ENCODE measurements at regions of chr17 and their contacts with region 1.

Region 1: GRCh38 chr17:17752089-17752820 is 71.0 kb downstream of the RAI1 start:
- DNase-seq: peak; percentile 93 to 98 (median 97)
- ATAC-seq: peak; percentile 96
- H3K4me3 ChIP-seq: peak overlapping the region; percentile 62
- H3K4me3 Mint-ChIP-seq: peak overlapping the region; percentile 78 to 99 (median 92)
- H3K27ac ChIP-seq: peak overlapping the region; percentile 89
- H3K27ac Mint-ChIP-seq: peak overlapping the region; percentile 96 to 100 (median 98)
- H3K4me1 ChIP-seq: peaks cover 39 to 67% of the 10 kb centered on the region in 2 donors
- H3K4me1 Mint-ChIP-seq: peaks cover 50 to 93% (median 77%) of the 10 kb centered on the region in 7 donors
- H3K27me3 ChIP-seq: no peaks in the 10 kb centered on the region
- H3K27me3 Mint-ChIP-seq: no peaks in the 10 kb centered on the region

Region 2: DNA sequence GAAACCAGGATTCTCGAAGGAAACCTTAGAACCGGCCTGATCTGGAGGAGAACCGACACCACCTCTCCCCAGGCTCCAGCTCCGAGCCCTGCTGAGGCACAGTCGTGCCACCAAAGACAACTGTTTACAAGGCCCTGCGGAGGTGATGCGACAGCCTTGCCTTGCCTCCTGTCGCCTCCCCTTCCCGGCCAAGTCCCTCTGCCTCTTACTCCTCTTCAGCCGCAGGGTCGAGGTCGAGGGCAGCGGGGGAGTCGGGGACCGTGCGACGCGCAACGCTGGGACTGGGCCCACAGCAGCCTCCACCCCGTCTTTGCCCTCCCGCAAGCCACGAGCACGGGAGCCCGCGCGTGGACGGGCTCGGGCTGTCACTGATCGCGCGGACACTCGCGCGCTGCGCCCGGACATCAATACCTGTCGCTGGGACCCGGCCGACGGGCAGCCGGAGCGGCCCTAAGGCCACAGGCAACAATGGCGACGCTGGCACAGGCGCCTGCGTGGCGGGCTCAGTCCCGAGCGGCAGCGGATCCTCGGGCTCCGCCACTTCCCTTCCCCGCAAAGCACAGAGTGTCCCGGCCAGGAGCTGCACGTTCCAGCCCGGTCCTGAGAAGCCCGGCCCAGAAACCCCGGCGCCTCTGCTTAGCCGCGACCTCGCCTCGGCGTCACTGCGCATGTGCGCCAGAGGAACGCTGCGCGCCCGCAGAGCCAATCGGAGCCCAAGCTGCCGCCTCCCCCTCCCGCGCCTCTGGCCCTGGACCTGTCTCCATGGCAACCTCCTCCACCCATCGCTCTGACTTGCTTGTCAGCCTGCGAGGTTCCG is 1183.5 kb before region 1 on chr17 and contains the start of gene ZNF287:
- CTCF ChIA-PET with region 1: no interaction called
- POLR2A ChIA-PET with region 1: no interaction called
- intact Hi-C with region 1: no loop called
- DNase-seq: peak; percentile 81 to 96 (median 92)
- ATAC-seq: peak; percentile 98
- H3K4me3 ChIP-seq: peak within 1 kb of the TSS; percentile 73
- H3K4me3 Mint-ChIP-seq: peak within 1 kb of the TSS; percentile 81 to 87 (median 86)
- H3K27ac ChIP-seq: peak within 1 kb of the TSS; percentile 82
- H3K27ac Mint-ChIP-seq: peak within 1 kb of the TSS; percentile 59 to 97 (median 91)
- H3K4me1 ChIP-seq: peaks cover 6 to 14% of the 10 kb centered on the region in 2 donors
- H3K4me1 Mint-ChIP-seq: peaks cover 8 to 29% (median 19%) of the 10 kb centered on the region in 7 donors
- H3K27me3 ChIP-seq: no peaks in the 10 kb centered on the region
- H3K27me3 Mint-ChIP-seq: peaks cover 0 to 10% (median 0%) of the 10 kb centered on the region in 5 donors
- total RNA-seq, gene ZNF287: 9.6 to 18.1 (median 13.4) TPM

Region 3: GRCh38 chr17:17476865-17477467 is 275.3 kb before region 1 on chr17 and contains the start of gene MED9:
- CTCF ChIA-PET with region 1: no interaction called
- POLR2A ChIA-PET with region 1: no interaction called
- intact Hi-C with region 1: loop called in 1 of 2 experiments (anchors 2 kb)
- DNase-seq: peak; percentile 90 to 98 (median 94)
- ATAC-seq: peak; percentile 100
- H3K4me3 ChIP-seq: peak within 1 kb of the TSS; percentile 98
- H3K4me3 Mint-ChIP-seq: peak within 1 kb of the TSS; percentile 85 to 92 (median 92)
- H3K27ac ChIP-seq: peak within 1 kb of the TSS; percentile 87
- H3K27ac Mint-ChIP-seq: peak within 1 kb of the TSS; percentile 72 to 95 (median 92)
- H3K4me1 ChIP-seq: peaks cover 10 to 29% of the 10 kb centered on the region in 2 donors
- H3K4me1 Mint-ChIP-seq: peaks cover 20 to 58% (median 49%) of the 10 kb centered on the region in 7 donors
- H3K27me3 ChIP-seq: no peaks in the 10 kb centered on the region
- H3K27me3 Mint-ChIP-seq: peaks cover 0 to 11% (median 0%) of the 10 kb centered on the region in 5 donors
- total RNA-seq, gene MED9: 14.0 to 24.1 (median 17.2) TPM

Region 4: DNA sequence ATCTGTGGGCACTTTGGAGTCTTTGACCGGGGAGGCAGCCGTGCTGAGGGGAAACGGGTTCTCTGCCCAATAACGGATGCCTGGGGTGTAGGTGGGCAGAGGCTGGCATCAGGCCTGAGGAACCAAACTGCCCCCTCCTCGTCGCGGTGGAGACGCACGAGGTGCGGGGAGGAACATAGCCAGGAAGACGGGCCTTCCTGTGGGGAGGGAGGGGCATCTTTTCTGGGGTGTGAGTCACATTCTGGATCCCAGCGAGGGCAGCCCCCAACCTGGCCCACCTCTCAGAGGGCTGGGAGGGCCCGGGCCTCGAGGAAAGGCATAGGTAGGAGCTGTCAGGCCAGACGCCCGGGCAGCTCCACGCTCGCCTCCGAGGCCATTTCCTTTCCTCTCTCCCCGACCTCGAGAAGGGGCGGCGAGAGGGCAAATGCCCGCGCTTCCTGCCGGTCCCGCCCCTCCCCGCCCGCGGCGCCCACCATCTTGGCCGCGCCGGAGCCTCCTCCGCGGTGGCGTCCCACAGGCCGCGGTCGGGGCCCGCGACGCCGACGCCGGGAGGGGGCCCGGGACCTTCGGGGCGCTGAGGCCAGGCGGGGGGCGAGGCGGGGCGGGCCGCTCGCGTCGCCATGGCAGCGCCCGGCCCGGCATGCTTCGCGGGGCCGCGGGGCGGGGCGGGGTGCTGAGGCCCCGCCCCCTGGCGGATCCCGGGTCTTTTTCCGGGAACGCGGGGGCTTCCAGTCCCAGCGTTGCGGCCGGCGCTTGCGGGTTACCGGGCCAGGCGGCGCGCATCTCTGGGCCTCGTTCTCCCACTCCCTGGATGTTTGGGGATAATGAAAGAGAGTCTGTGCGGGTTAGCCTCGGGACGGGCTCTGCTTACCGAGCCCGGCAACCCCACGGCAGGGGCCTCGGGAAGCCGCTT is 57.8 kb before region 1 on chr17:
- CTCF ChIA-PET with region 1: interaction called, 4 read pairs
- POLR2A ChIA-PET with region 1: interaction called, 5 read pairs
- intact Hi-C with region 1: loop called (anchors 1 kb)
- DNase-seq: peak; percentile 65 to 83 (median 72)
- ATAC-seq: peak; percentile 87
- H3K4me3 ChIP-seq: peak overlapping the region; percentile 84
- H3K4me3 Mint-ChIP-seq: peak overlapping the region; percentile 88 to 96 (median 92)
- H3K27ac ChIP-seq: peak overlapping the region; percentile 93
- H3K27ac Mint-ChIP-seq: peak overlapping the region; percentile 95 to 99 (median 98)
- H3K4me1 ChIP-seq: peaks cover 15 to 51% of the 10 kb centered on the region in 2 donors
- H3K4me1 Mint-ChIP-seq: peaks cover 46 to 81% (median 72%) of the 10 kb centered on the region in 7 donors
- H3K27me3 ChIP-seq: no peaks in the 10 kb centered on the region
- H3K27me3 Mint-ChIP-seq: no peaks in the 10 kb centered on the region

Region 5: GRCh38 chr17:17706140-17707060 is 45.9 kb before region 1 on chr17:
- CTCF ChIA-PET with region 1: no interaction called
- POLR2A ChIA-PET with region 1: no interaction called
- intact Hi-C with region 1: no loop called
- DNase-seq: no peak
- ATAC-seq: no peak
- H3K4me3 ChIP-seq: no peak overlapping the region
- H3K4me3 Mint-ChIP-seq: no peak overlapping the region
- H3K27ac ChIP-seq: no peak overlapping the region
- H3K27ac Mint-ChIP-seq: peak overlapping the region in 1 of 9 donors; percentile 33
- H3K4me1 ChIP-seq: no peaks in the 10 kb centered on the region
- H3K4me1 Mint-ChIP-seq: peaks cover 0 to 17% (median 4%) of the 10 kb centered on the region in 7 donors
- H3K27me3 ChIP-seq: no peaks in the 10 kb centered on the region
- H3K27me3 Mint-ChIP-seq: no peaks in the 10 kb centered on the region

Region 6: DNA sequence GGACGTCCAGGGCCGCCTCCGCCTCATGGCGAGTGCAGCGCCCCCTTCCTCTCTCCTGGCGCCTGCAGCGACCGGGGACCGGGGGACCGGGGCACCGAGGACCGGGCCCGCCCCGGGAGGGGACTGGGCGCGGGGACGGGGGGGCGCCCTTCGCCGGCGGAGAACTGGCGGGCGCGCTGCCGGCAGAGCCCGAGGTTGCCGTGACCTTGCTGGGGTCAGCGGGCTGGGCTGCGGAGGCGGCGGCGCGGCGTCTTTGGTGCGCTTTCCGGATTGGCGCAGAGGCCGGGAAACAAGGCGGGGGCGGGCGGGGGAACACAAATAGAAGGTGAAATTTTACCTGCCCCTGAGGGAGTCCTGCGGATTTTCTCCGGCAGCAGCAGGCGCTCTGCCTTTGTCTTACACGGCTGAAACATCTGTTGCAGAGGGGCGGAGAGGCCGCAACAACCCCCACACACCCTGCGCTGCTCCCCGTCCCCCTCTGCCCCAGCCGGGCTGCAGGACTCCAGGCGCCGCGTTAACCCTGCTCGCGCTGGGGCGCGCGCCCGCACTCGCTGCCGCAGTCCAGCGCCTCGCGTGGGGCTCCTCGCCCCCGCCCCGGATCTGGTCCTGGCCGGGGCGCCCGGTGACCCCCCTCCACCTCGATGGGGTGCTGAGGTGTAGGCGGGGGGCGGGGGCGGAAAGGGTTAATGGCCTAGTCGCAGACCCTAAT is 31.0 kb after region 1 on chr17:
- CTCF ChIA-PET with region 1: interaction called, 3 read pairs
- POLR2A ChIA-PET with region 1: interaction called, 5 read pairs
- intact Hi-C with region 1: loop called (anchors 1 to 2 kb)
- DNase-seq: peak; percentile 39 to 67 (median 63)
- ATAC-seq: peak; percentile 71
- H3K4me3 ChIP-seq: peak overlapping the region; percentile 72
- H3K4me3 Mint-ChIP-seq: peak overlapping the region; percentile 80 to 95 (median 91)
- H3K27ac ChIP-seq: peak overlapping the region; percentile 67
- H3K27ac Mint-ChIP-seq: peak overlapping the region in 7 of 9 donors; percentile 10 to 88 (median 74)
- H3K4me1 ChIP-seq: peaks cover 7 to 15% of the 10 kb centered on the region in 2 donors
- H3K4me1 Mint-ChIP-seq: peaks cover 15 to 32% (median 25%) of the 10 kb centered on the region in 7 donors
- H3K27me3 ChIP-seq: no peaks in the 10 kb centered on the region
- H3K27me3 Mint-ChIP-seq: peaks cover 0 to 29% (median 0%) of the 10 kb centered on the region in 5 donors

Region 7: GRCh38 chr17:17800504-17801021 is 48.3 kb after region 1 on chr17:
- CTCF ChIA-PET with region 1: no interaction called
- POLR2A ChIA-PET with region 1: no interaction called
- intact Hi-C with region 1: no loop called
- DNase-seq: no peak
- ATAC-seq: no peak
- H3K4me3 ChIP-seq: no peak overlapping the region
- H3K4me3 Mint-ChIP-seq: no peak overlapping the region
- H3K27ac ChIP-seq: no peak overlapping the region
- H3K27ac Mint-ChIP-seq: no peak overlapping the region
- H3K4me1 ChIP-seq: no peaks in the 10 kb centered on the region
- H3K4me1 Mint-ChIP-seq: peaks cover 0 to 6% (median 0%) of the 10 kb centered on the region in 7 donors
- H3K27me3 ChIP-seq: no peaks in the 10 kb centered on the region
- H3K27me3 Mint-ChIP-seq: no peaks in the 10 kb centered on the region

Region 8: GRCh38 chr17:17836250-17836817 is 84.1 kb after region 1 on chr17:
- CTCF ChIA-PET with region 1: interaction called, 3 read pairs
- POLR2A ChIA-PET with region 1: interaction called, 4 read pairs
- intact Hi-C with region 1: loop called (anchors 1 kb)
- DNase-seq: peak; percentile 93 to 99 (median 97)
- ATAC-seq: peak; percentile 85
- H3K4me3 ChIP-seq: peak overlapping the region; percentile 86
- H3K4me3 Mint-ChIP-seq: peak overlapping the region; percentile 85 to 95 (median 90)
- H3K27ac ChIP-seq: peak overlapping the region; percentile 99
- H3K27ac Mint-ChIP-seq: peak overlapping the region; percentile 94 to 99 (median 98)
- H3K4me1 ChIP-seq: peaks cover 18 to 60% of the 10 kb centered on the region in 2 donors
- H3K4me1 Mint-ChIP-seq: peaks cover 46 to 79% (median 75%) of the 10 kb centered on the region in 7 donors
- H3K27me3 ChIP-seq: no peaks in the 10 kb centered on the region
- H3K27me3 Mint-ChIP-seq: no peaks in the 10 kb centered on the region

Region 9: DNA sequence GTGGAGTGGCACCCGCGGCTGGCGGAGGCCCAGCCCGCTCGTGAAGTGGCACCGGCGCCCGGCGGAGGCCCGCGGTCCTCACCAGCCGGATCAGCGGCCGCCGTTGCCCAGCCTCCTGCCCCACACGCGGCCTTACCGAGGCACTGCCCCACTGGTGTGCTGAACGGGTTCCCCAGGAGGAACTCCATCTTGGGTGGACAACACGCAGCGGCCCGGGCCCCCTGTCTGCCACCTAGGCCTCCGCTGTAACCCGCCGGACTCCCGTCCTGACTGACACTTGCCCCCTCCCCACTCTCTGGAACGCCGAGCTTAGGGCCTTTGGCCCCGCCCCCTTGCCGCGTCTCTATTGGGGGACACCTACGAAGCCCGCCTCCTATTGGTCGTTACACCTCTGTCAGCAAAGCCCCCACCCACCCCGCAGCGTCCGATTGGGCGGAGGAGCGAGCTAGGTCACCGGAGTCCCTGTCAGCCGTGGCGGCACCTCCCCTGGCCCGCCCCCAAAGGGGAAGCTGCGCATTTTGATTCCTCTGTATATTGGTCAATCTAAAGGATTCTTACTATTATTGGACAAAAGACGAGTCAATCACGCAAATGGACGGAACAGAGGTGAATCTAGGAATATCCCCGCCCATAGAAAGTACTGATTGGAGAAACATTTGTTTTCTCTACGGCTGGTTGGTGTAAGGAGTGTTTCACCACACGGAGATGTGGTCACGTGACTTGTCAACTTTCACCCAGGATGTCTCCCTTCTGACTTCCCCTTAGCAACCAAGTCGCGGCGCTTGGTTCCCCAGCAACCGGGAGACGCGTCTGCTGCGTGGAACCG is 220.1 kb after region 1 on chr17 and contains the starts of genes DRC3 and TOM1L2:
- CTCF ChIA-PET with region 1: no interaction called
- POLR2A ChIA-PET with region 1: interaction called, 3 read pairs
- intact Hi-C with region 1: loop called (anchors 1 to 2 kb)
- DNase-seq: peak; percentile 96 to 100 (median 100)
- ATAC-seq: peak; percentile 95
- H3K4me3 ChIP-seq: peak within 1 kb of the TSS; percentile 70
- H3K4me3 Mint-ChIP-seq: peak within 1 kb of the TSS; percentile 93 to 98 (median 97)
- H3K27ac ChIP-seq: peak within 1 kb of the TSS; percentile 85
- H3K27ac Mint-ChIP-seq: peak within 1 kb of the TSS; percentile 89 to 98 (median 95)
- H3K4me1 ChIP-seq: peaks cover 14 to 26% of the 10 kb centered on the region in 2 donors
- H3K4me1 Mint-ChIP-seq: peaks cover 30 to 57% (median 45%) of the 10 kb centered on the region in 7 donors
- H3K27me3 ChIP-seq: no peaks in the 10 kb centered on the region
- H3K27me3 Mint-ChIP-seq: no peaks in the 10 kb centered on the region
- total RNA-seq, gene DRC3: 1.00 to 2.4 TPM in 2 of 5 experiments, not detected in the others
- total RNA-seq, gene TOM1L2: 35.1 to 84.1 (median 63.4) TPM

Region 10: GRCh38 chr17:18087610-18088491 is 335.6 kb after region 1 on chr17 and contains the start of gene DRG2:
- CTCF ChIA-PET with region 1: no interaction called
- POLR2A ChIA-PET with region 1: no interaction called
- intact Hi-C with region 1: loop called in 1 of 2 experiments (anchors 1 kb)
- DNase-seq: peak; percentile 79 to 94 (median 85)
- ATAC-seq: peak; percentile 98
- H3K4me3 ChIP-seq: peak within 1 kb of the TSS; percentile 84
- H3K4me3 Mint-ChIP-seq: peak within 1 kb of the TSS; percentile 97 to 100 (median 98)
- H3K27ac ChIP-seq: peak within 1 kb of the TSS; percentile 85
- H3K27ac Mint-ChIP-seq: peak within 1 kb of the TSS; percentile 96 to 99 (median 98)
- H3K4me1 ChIP-seq: peaks cover 9 to 12% of the 10 kb centered on the region in 2 donors
- H3K4me1 Mint-ChIP-seq: peaks cover 19 to 35% (median 27%) of the 10 kb centered on the region in 7 donors
- H3K27me3 ChIP-seq: no peaks in the 10 kb centered on the region
- H3K27me3 Mint-ChIP-seq: no peaks in the 10 kb centered on the region
- total RNA-seq, gene DRG2: 39.6 to 54.7 (median 48.8) TPM